Endothelial cell of umbilical vein (primary cell): ENCODE measurements at regions of chr6 and their contacts with region 1.

Region 1: DNA sequence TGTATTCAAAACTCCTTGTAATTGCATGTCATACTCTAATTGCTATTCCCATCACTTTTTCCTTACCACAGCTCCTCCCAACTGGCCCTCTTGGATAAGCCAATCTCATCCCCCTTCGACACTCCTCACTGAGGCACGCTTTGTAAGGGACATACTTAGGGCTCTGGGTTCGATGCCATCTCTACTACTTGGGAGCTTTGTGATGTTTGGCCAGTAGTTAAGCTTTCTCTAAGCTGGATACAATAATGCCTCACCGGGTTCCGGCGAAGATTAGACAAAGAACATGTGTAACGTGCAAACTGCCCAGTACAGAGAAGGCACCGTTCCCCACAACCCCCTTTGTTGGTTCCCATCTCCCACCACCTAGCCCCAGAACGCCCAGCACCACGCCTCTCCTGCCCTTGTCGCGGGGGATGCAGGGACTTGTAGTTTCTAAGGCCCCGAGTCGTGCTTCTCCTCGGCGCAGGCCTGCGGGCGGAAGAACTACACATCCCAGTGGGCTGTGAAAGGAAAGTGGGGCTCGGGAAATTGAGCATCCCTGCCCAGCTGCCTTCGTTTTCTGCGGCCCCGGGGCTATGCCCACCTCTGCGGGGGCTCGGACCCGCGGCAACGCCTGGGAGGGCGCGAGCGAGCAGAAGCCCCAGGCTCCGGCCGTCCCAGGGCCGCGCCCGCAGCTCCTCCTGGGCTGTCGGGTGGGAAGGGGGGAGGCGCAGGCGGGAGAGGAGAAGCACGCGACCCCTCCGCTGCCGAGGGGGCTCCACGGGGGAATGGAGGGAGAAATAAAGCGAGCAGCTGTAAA is 1.1 kb upstream of the ZDHHC14 start:
- DNase-seq: peak; percentile 91
- H3K4me3 ChIP-seq: peak overlapping the region; percentile 61 to 97 (median 74)
- H3K27ac ChIP-seq: peak overlapping the region; percentile 60
- H3K4me1 ChIP-seq: peaks cover 18% of the 10 kb centered on the region
- H3K27me3 ChIP-seq: no peaks in the 10 kb centered on the region
- CTCF ChIP-seq: no peak
- POLR2A ChIP-seq: no peak

Region 2: GRCh38 chr6:157434349-157435033 is 54.6 kb after region 1 on chr6:
- CTCF ChIA-PET with region 1: no interaction called
- POLR2A ChIA-PET with region 1: no interaction called
- dilution Hi-C with region 1: no loop called
- intact Hi-C with region 1: no loop called
- DNase-seq: no peak
- H3K4me3 ChIP-seq: no peak overlapping the region
- H3K27ac ChIP-seq: no peak overlapping the region
- H3K4me1 ChIP-seq: peaks cover 10% of the 10 kb centered on the region
- H3K27me3 ChIP-seq: no peaks in the 10 kb centered on the region
- CTCF ChIP-seq: no peak
- POLR2A ChIP-seq: no peak

Region 3: DNA sequence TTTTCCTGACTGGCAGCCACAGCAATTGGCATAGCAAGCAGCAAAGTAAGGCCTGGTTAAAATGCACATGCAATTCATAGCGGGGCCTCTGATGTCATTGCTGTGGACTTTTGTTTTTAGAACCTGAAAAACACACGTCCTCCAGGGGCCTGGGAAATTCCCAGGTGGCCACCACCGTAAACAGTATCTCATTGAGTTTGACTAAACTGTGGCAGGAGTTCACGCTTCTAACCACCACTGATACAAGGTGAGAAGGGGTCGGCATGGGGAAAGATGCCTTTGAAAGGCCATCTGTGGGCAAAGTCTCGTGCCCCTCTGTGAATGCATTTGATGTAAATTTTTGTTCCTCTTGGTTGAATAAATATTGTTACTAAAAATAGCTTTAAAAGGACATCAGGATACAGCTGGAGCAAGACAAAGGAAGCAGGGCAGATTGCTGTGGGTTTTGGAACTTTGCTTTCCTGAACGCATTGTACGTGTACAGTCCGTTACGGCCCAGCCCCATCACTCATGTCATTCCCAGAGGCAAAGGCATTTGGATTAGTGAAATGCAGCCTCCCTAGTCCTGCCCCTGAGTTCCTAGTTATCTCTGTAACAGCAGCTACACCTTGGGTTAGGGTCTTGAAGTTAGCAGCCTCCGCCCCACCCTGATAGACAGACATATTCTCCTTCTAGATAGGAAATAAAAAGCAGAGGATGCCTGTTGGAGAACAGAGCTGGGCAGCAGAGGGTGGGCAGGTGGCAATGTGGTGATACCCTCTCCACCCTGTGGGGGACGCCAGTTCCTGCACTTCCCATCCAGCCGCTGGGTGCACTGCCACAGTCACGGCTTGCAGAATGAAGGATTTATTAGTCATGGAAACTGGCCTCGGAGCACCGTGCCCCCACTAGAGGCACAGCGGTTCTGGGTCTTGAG is 81.4 kb after region 1 on chr6:
- CTCF ChIA-PET with region 1: no interaction called
- POLR2A ChIA-PET with region 1: no interaction called
- dilution Hi-C with region 1: no loop called
- intact Hi-C with region 1: loop called (anchors 2 kb)
- DNase-seq: peak; percentile 84
- H3K4me3 ChIP-seq: no peak overlapping the region
- H3K27ac ChIP-seq: peak overlapping the region; percentile 72
- H3K4me1 ChIP-seq: peaks cover 24% of the 10 kb centered on the region
- H3K27me3 ChIP-seq: no peaks in the 10 kb centered on the region
- CTCF ChIP-seq: peak; percentile 31 to 52
- POLR2A ChIP-seq: no peak

Region 4: GRCh38 chr6:157535339-157536222 is 155.7 kb after region 1 on chr6:
- CTCF ChIA-PET with region 1: interaction called, 3 read pairs
- POLR2A ChIA-PET with region 1: no interaction called
- dilution Hi-C with region 1: no loop called
- intact Hi-C with region 1: loop called (anchors 1 kb)
- DNase-seq: peak; percentile 96
- H3K4me3 ChIP-seq: peak overlapping the region in 1 of 3 experiments; percentile 34
- H3K27ac ChIP-seq: peak overlapping the region; percentile 94
- H3K4me1 ChIP-seq: peaks cover 42% of the 10 kb centered on the region
- H3K27me3 ChIP-seq: no peaks in the 10 kb centered on the region
- CTCF ChIP-seq: no peak
- POLR2A ChIP-seq: no peak

Region 5: DNA sequence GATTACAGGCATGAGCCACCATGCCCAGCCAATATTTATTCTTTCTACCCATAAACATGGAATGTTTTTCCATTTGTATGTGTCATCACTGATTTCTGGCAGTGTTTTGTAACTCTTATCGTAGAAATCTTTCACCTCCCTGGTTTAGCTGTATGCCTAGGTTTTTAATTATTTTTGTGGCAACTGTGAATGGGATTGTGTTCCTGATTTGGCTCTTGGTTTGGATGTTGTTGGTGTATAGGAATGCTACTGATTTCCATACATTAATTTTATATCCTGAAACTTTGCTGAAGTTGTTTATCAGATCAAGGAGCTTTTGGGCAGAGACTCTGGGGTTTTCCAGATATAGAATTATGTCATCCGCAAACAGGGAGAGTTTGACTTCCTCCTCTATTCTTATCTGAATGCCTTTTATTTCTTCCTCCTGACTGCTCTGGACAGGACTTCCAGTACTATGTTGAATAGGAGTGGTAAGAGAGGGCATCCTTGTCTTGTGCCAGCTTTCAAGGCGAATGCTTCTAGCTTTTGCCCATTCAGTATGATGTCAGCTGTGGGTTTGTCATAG is 199.7 kb after region 1 on chr6:
- CTCF ChIA-PET with region 1: no interaction called
- POLR2A ChIA-PET with region 1: no interaction called
- dilution Hi-C with region 1: no loop called
- intact Hi-C with region 1: loop called (anchors 5 kb)
- DNase-seq: peak; percentile 90
- H3K4me3 ChIP-seq: no peak overlapping the region
- H3K27ac ChIP-seq: peak overlapping the region; percentile 74
- H3K4me1 ChIP-seq: peaks cover 21% of the 10 kb centered on the region
- H3K27me3 ChIP-seq: no peaks in the 10 kb centered on the region
- CTCF ChIP-seq: no peak
- POLR2A ChIP-seq: no peak

Region 6: GRCh38 chr6:157597446-157598312 is 217.8 kb after region 1 on chr6:
- CTCF ChIA-PET with region 1: no interaction called
- POLR2A ChIA-PET with region 1: no interaction called
- dilution Hi-C with region 1: no loop called
- intact Hi-C with region 1: loop called (anchors 1 kb)
- DNase-seq: peak; percentile 57
- H3K4me3 ChIP-seq: no peak overlapping the region
- H3K27ac ChIP-seq: no peak overlapping the region
- H3K4me1 ChIP-seq: no peaks in the 10 kb centered on the region
- H3K27me3 ChIP-seq: no peaks in the 10 kb centered on the region
- CTCF ChIP-seq: peak; percentile 50 to 68
- POLR2A ChIP-seq: no peak

Region 7: DNA sequence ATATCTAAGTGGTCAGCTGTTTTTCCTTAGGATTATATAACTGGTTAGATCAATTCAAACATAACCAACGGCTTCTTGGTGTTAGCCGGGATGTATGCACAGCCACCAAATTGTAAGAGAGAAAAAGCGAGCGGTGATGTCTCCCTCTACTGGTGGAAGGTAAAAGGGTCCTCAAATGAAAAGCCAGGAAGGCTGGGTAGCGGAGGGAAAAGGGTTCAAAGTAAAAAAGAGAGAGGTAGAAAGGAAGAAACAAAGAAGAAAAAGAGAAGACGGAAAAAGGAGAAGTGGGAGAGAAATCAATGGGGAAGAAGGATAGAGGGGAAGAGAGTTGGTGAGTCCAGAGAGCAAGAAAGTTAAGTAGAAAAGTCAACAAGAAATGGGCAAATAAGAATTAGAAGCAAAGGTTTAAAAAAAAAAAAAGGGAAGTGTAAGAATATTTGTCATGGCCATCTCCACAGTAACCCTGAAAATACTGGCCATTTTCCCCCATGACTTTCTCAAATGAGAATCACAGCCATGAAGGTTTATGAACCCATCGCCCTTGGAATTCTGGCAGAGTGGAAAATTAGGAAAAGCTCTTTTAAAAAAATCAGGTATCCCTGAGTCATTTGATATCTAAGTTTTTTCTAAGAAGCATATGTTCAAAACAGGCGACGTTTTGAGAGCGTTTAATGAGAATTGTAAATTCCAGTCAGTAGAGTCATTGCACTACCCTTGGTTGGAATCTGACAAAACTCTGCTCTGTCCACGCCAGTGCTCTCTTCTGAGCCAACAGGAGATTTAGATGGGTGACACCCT is 287.6 kb after region 1 on chr6:
- CTCF ChIA-PET with region 1: interaction called, 15 read pairs
- POLR2A ChIA-PET with region 1: no interaction called
- dilution Hi-C with region 1: no loop called
- intact Hi-C with region 1: loop called (anchors 1 kb)
- DNase-seq: peak; percentile 73
- H3K4me3 ChIP-seq: no peak overlapping the region
- H3K27ac ChIP-seq: no peak overlapping the region
- H3K4me1 ChIP-seq: peaks cover 7% of the 10 kb centered on the region
- H3K27me3 ChIP-seq: no peaks in the 10 kb centered on the region
- CTCF ChIP-seq: peak; percentile 75 to 88
- POLR2A ChIP-seq: no peak

Region 8: GRCh38 chr6:157756708-157757429 is 377.0 kb after region 1 on chr6:
- CTCF ChIA-PET with region 1: no interaction called
- POLR2A ChIA-PET with region 1: no interaction called
- dilution Hi-C with region 1: no loop called
- intact Hi-C with region 1: loop called (anchors 1 kb)
- DNase-seq: peak; percentile 88
- H3K4me3 ChIP-seq: no peak overlapping the region
- H3K27ac ChIP-seq: peak overlapping the region; percentile 3
- H3K4me1 ChIP-seq: peaks cover 47% of the 10 kb centered on the region
- H3K27me3 ChIP-seq: no peaks in the 10 kb centered on the region
- CTCF ChIP-seq: peak; percentile 80 to 83
- POLR2A ChIP-seq: no peak